IMR-90 (cell line): ENCODE measurements at regions of chr1 and their contacts with region 1.

Region 1: GRCh38 chr1:85584264-85584781 is 3.8 kb downstream of the CCN1 start:
- DNase-seq: peak; percentile 95
- ATAC-seq: peak; percentile 19
- H3K4me3 ChIP-seq: no peak overlapping the region
- H3K27ac ChIP-seq: no peak overlapping the region
- H3K4me1 ChIP-seq: peaks cover 2% of the 10 kb centered on the region
- H3K27me3 ChIP-seq: no peaks in the 10 kb centered on the region
- CTCF ChIP-seq: no peak
- POLR2A ChIP-seq: peak; percentile 98
- RAD21 ChIP-seq: no peak; the same call in 1 of the 2 replicates

Region 2: DNA sequence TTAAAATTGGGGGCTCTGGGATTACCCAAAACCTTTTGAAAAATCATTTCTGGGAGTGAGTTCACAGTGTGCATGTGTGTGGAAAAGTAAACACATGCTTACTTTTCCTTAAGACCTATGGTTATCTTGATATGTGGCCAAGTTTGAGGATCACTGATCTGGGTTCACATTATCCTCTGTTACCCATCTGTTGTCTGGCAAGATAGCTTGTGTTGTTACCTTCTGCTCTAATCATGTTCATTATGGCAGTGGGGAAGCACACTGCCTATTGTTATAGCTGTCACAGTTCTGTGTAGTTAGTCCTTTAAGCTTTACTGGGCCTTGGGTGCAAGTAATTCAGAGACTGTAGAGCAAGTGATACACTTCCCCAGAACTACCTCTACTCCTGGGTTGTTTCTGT is 1015.1 kb before region 1 on chr1:
- CTCF ChIA-PET with region 1: no interaction called
- POLR2A ChIA-PET with region 1: no interaction called
- dilution Hi-C with region 1: no loop called
- in situ Hi-C with region 1: no loop called
- intact Hi-C with region 1: no loop called
- DNase-seq: no peak
- ATAC-seq: no peak
- H3K4me3 ChIP-seq: no peak overlapping the region
- H3K27ac ChIP-seq: no peak overlapping the region
- H3K4me1 ChIP-seq: peaks cover 2% of the 10 kb centered on the region; the same call in 1 of the 2 replicates
- H3K27me3 ChIP-seq: no peaks in the 10 kb centered on the region
- CTCF ChIP-seq: no peak
- POLR2A ChIP-seq: no peak
- RAD21 ChIP-seq: no peak

Region 3: GRCh38 chr1:85282424-85282823 is 301.9 kb before region 1 on chr1:
- CTCF ChIA-PET with region 1: no interaction called
- POLR2A ChIA-PET with region 1: no interaction called
- dilution Hi-C with region 1: no loop called
- in situ Hi-C with region 1: no loop called
- intact Hi-C with region 1: no loop called
- DNase-seq: no peak
- ATAC-seq: no peak
- H3K4me3 ChIP-seq: no peak overlapping the region
- H3K27ac ChIP-seq: no peak overlapping the region
- H3K4me1 ChIP-seq: peaks cover 6% of the 10 kb centered on the region
- H3K27me3 ChIP-seq: no peaks in the 10 kb centered on the region
- CTCF ChIP-seq: no peak
- POLR2A ChIP-seq: no peak
- RAD21 ChIP-seq: no peak

Region 4: GRCh38 chr1:85607126-85607912 is 23.0 kb after region 1 on chr1:
- CTCF ChIA-PET with region 1: interaction called, 8 read pairs
- POLR2A ChIA-PET with region 1: interaction called, 39 read pairs
- dilution Hi-C with region 1: no loop called
- in situ Hi-C with region 1: no loop called
- intact Hi-C with region 1: loop called (anchors 1 kb)
- DNase-seq: peak; percentile 100
- ATAC-seq: peak; percentile 76
- H3K4me3 ChIP-seq: no peak overlapping the region
- H3K27ac ChIP-seq: peak overlapping the region; percentile 91
- H3K4me1 ChIP-seq: peaks cover 39% of the 10 kb centered on the region
- H3K27me3 ChIP-seq: no peaks in the 10 kb centered on the region
- CTCF ChIP-seq: no peak
- POLR2A ChIP-seq: peak; percentile 68
- RAD21 ChIP-seq: no peak

Region 5: GRCh38 chr1:85628791-85629531 is 44.6 kb after region 1 on chr1:
- CTCF ChIA-PET with region 1: interaction called, 4 read pairs
- POLR2A ChIA-PET with region 1: interaction called, 51 read pairs
- dilution Hi-C with region 1: no loop called
- in situ Hi-C with region 1: no loop called
- intact Hi-C with region 1: loop called (anchors 5 kb)
- DNase-seq: peak; percentile 95
- ATAC-seq: peak; percentile 89
- H3K4me3 ChIP-seq: 0 out of 2 replicates have a peak overlapping the region, but pooled peaks have one; percentile 0
- H3K27ac ChIP-seq: peak overlapping the region; percentile 96
- H3K4me1 ChIP-seq: peaks cover 13% of the 10 kb centered on the region
- H3K27me3 ChIP-seq: no peaks in the 10 kb centered on the region
- CTCF ChIP-seq: no peak
- POLR2A ChIP-seq: peak; percentile 34; the same call in 1 of the 2 replicates
- RAD21 ChIP-seq: no peak

Region 6: GRCh38 chr1:85692730-85693314 is 108.5 kb after region 1 on chr1:
- CTCF ChIA-PET with region 1: interaction called, 3 read pairs
- POLR2A ChIA-PET with region 1: interaction called, 23 read pairs
- dilution Hi-C with region 1: no loop called
- in situ Hi-C with region 1: no loop called
- intact Hi-C with region 1: loop called (anchors 1 kb)
- DNase-seq: peak; percentile 78
- ATAC-seq: peak; percentile 74
- H3K4me3 ChIP-seq: no peak overlapping the region
- H3K27ac ChIP-seq: no peak overlapping the region
- H3K4me1 ChIP-seq: no peaks in the 10 kb centered on the region; the same call in 1 of the 2 replicates
- H3K27me3 ChIP-seq: no peaks in the 10 kb centered on the region
- CTCF ChIP-seq: peak; percentile 67
- POLR2A ChIP-seq: no peak
- RAD21 ChIP-seq: peak; percentile 69

Region 7: DNA sequence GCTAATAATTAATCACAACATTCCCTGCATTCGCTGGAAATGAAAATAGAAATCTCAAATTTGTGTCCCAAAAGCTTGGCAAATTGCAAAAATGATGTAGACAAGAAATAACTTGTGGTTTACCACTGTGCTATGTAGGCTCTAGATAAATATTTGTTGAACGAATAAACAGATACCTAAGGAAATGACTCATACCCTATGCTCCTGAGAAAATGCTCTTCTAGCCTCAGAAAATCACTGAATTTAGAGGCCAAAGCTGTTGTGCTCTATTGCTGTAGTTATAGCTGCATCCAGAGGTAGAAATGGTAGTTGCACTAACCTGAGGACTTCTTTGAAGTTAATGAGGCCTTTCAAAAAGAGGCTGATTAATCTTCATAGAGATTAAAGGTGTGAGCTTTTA is 265.9 kb after region 1 on chr1:
- CTCF ChIA-PET with region 1: no interaction called
- POLR2A ChIA-PET with region 1: no interaction called
- dilution Hi-C with region 1: no loop called
- in situ Hi-C with region 1: no loop called
- intact Hi-C with region 1: loop called (anchors 5 kb)
- DNase-seq: peak; percentile 95
- ATAC-seq: peak; percentile 97
- H3K4me3 ChIP-seq: no peak overlapping the region
- H3K27ac ChIP-seq: no peak overlapping the region; the same call in 1 of the 2 replicates
- H3K4me1 ChIP-seq: peaks cover 4% of the 10 kb centered on the region; the same call in 1 of the 2 replicates
- H3K27me3 ChIP-seq: no peaks in the 10 kb centered on the region
- CTCF ChIP-seq: peak; percentile 54
- POLR2A ChIP-seq: no peak
- RAD21 ChIP-seq: peak; percentile 69

Region 8: GRCh38 chr1:85865213-85865612 is 280.9 kb after region 1 on chr1:
- CTCF ChIA-PET with region 1: no interaction called
- POLR2A ChIA-PET with region 1: no interaction called
- dilution Hi-C with region 1: no loop called
- in situ Hi-C with region 1: no loop called
- intact Hi-C with region 1: no loop called
- DNase-seq: peak; percentile 12
- ATAC-seq: peak; percentile 50
- H3K4me3 ChIP-seq: no peak overlapping the region
- H3K27ac ChIP-seq: peak overlapping the region; percentile 41; the same call in 1 of the 2 replicates
- H3K4me1 ChIP-seq: peaks cover 2% of the 10 kb centered on the region; the same call in 1 of the 2 replicates
- H3K27me3 ChIP-seq: no peaks in the 10 kb centered on the region
- CTCF ChIP-seq: no peak
- POLR2A ChIP-seq: no peak
- RAD21 ChIP-seq: no peak

Region 9: GRCh38 chr1:85884372-85885035 is 300.2 kb after region 1 on chr1:
- CTCF ChIA-PET with region 1: no interaction called
- POLR2A ChIA-PET with region 1: no interaction called
- dilution Hi-C with region 1: no loop called
- in situ Hi-C with region 1: no loop called
- intact Hi-C with region 1: loop called (anchors 1 kb)
- DNase-seq: peak; percentile 48
- ATAC-seq: peak; percentile 98
- H3K4me3 ChIP-seq: no peak overlapping the region
- H3K27ac ChIP-seq: no peak overlapping the region
- H3K4me1 ChIP-seq: no peaks in the 10 kb centered on the region
- H3K27me3 ChIP-seq: no peaks in the 10 kb centered on the region
- CTCF ChIP-seq: peak; percentile 65
- POLR2A ChIP-seq: no peak
- RAD21 ChIP-seq: peak; percentile 56

Region 10: DNA sequence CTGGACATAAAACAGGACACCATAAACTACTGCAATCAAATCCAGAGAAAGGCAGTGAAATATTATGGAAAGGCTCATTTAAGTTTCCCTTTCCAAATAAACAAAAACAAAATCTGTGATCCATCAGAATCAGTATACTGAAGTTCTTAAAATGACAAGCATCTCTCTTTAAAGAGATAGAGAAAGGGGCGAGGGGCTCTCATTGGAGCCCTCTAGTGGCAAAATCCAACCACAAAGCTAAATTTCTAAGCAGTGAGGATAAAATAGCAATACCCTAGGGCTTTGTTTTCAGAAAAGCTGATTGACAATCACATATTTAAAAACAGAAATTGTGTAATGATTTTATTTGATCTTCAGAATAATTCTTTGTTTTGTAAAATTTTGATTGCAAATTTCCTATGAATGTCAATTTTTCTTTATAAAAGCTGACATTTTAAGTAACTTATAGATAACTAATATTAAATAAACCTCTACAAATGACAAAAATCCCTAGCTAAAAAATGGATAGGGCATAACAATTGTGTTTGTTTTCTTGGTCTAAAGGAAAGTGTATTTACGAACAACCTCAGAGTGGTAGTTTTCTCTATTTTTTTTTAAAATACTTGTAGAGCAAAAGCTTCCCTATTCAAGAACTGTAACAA is 434.1 kb after region 1 on chr1:
- CTCF ChIA-PET with region 1: no interaction called
- POLR2A ChIA-PET with region 1: no interaction called
- dilution Hi-C with region 1: no loop called
- in situ Hi-C with region 1: no loop called
- intact Hi-C with region 1: loop called (anchors 5 kb)
- DNase-seq: peak; percentile 23
- ATAC-seq: peak; percentile 67; the same call in 1 of the 2 replicates
- H3K4me3 ChIP-seq: no peak overlapping the region
- H3K27ac ChIP-seq: no peak overlapping the region
- H3K4me1 ChIP-seq: no peaks in the 10 kb centered on the region
- H3K27me3 ChIP-seq: no peaks in the 10 kb centered on the region
- CTCF ChIP-seq: peak; percentile 68
- POLR2A ChIP-seq: no peak
- RAD21 ChIP-seq: peak; percentile 62